Pancreas (tissue), 10 donors: ENCODE measurements at regions of chr18 and their contacts with region 1.

Region 1: DNA sequence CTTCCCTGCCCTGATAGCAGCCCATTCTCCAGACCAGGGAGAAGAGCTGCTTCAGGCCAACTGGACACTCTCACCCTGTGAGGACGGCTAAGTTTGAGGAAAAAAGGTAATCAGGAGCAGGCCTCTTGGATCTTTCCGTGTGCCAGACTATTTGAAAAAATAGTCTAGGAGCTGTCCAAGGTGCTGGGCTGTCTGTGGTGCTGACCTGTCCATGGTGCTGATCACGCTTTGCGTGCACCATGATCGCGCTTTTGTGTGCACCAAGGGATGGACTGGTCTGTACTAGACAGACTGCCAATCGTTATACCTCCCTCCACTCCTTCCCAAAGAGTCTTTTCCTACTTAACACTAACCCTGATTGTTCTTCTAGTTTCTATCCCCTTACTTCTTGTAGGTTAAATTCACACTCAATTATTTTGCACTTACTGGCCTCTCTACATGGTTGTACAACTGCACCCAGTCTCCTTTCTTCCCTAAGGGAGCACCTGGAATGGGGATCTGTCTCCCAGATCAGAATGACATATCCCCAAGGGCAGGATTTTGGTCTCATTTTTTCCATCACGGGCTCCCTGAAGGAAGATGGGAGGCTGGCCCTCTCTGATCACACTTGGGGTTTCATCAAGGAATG is 295.4 kb downstream of the CELF4 start:
- DNase-seq: peak in 4 of 6 donors; percentile 16 to 59 (median 45)
- ATAC-seq: peak; percentile 68 to 97 (median 83)
- H3K4me3 ChIP-seq: no peak overlapping the region
- H3K27ac ChIP-seq: no peak overlapping the region
- H3K4me1 ChIP-seq: no peaks in the 10 kb centered on the region
- H3K27me3 ChIP-seq: peaks cover 0 to 5% (median 0%) of the 10 kb centered on the region in 4 donors
- CTCF ChIP-seq: no peak

Region 2: DNA sequence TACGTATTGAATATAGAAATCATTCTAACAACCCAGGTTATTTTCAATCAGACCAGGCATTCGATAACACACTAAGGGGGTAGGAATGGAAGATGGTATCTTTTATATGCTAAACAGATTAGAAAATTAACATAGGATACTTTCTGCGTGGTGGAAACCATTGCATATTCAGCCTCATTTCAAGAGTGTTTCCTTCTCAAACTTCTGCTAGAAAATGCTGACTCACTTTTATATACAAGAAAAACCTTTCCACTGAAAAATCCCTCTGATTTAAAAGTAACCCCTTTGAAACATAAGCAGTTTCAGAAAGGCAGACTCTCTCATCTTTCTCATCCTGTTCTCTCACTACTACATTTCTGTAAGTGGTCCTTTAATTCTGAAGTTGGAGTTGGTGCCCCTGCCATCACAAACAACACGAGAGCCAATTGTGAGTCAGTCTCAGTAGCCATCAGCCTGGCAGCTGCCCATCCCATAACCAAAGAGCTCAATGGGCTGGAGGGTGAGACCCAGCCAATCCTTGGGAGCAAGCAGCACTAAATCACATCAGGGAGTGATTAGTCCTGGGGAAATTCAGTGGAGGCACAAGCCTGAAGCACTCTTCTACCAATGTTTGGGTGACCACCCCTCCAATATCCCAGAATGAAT is 47.7 kb before region 1 on chr18:
- intact Hi-C with region 1: loop called in 1 of 3 experiments (anchors 10 kb)
- DNase-seq: no peak
- ATAC-seq: no peak
- H3K4me3 ChIP-seq: no peak overlapping the region
- H3K27ac ChIP-seq: no peak overlapping the region
- H3K4me1 ChIP-seq: no peaks in the 10 kb centered on the region
- H3K27me3 ChIP-seq: no peaks in the 10 kb centered on the region
- CTCF ChIP-seq: no peak

Region 3: GRCh38 chr18:37364237-37364636 is 94.1 kb after region 1 on chr18:
- intact Hi-C with region 1: no loop called
- DNase-seq: peak; percentile 32 to 84 (median 66)
- ATAC-seq: peak; percentile 38 to 88 (median 75)
- H3K4me3 ChIP-seq: no peak overlapping the region
- H3K27ac ChIP-seq: no peak overlapping the region
- H3K4me1 ChIP-seq: peaks cover 0 to 6% (median 0%) of the 10 kb centered on the region in 3 donors
- H3K27me3 ChIP-seq: no peaks in the 10 kb centered on the region
- CTCF ChIP-seq: no peak